AG04450 (cell line): ENCODE measurements at regions of chr14 and their contacts with region 1.

Region 1: DNA sequence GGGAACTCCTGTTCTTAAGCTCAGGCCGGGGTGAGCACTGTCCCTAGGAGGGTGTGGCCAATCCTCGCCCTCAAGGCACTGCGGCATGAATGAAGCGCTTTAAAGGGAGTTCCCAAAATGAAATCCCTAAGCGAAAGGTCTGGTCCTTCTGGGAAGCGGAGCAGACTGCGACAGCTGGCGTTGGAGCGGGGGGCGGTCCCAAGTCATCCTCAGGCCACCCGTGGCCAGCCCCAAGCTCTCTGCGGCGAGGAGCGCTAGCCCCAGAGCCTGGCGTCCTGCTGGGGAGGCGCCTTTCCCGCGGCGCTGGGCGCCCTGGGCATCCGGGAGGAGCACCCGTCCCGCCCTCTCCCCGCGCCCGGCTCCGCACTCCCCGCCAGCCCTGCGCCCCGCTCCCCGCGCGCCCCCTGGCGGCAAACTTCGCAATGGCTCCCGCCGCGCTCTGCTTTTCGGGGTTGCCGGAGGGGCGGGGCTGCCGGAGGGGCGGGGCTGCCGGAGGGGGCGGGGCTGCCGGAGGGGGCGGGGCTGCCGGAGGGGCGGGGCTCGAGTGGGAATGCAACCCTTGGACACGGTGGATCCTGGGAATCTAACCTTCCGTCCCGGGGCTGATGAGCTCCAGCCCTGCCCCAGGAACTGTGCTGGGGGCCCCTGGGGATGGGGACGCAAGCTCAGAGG is 25.4 kb downstream of the ZBTB42 start:
- DNase-seq: peak; percentile 21
- H3K4me3 ChIP-seq: peak overlapping the region; percentile 77
- H3K27ac ChIP-seq: peak overlapping the region; percentile 11
- H3K27me3 ChIP-seq: no peaks in the 10 kb centered on the region
- CTCF ChIP-seq: peak; percentile 58

Region 2: GRCh38 chr14:104752735-104753531 is 73.4 kb before region 1 on chr14 and contains the start of gene SIVA1:
- CTCF ChIA-PET with region 1: interaction called, 27 read pairs
- POLR2A ChIA-PET with region 1: no interaction called
- DNase-seq: peak; percentile 98
- H3K4me3 ChIP-seq: peak within 1 kb of the TSS; percentile 94
- H3K27ac ChIP-seq: peak within 1 kb of the TSS; percentile 52
- H3K27me3 ChIP-seq: no peaks in the 10 kb centered on the region
- CTCF ChIP-seq: no peak
- polyA plus RNA-seq, gene SIVA1: 49.7 and 75.3 TPM in 2 replicates

Region 3: DNA sequence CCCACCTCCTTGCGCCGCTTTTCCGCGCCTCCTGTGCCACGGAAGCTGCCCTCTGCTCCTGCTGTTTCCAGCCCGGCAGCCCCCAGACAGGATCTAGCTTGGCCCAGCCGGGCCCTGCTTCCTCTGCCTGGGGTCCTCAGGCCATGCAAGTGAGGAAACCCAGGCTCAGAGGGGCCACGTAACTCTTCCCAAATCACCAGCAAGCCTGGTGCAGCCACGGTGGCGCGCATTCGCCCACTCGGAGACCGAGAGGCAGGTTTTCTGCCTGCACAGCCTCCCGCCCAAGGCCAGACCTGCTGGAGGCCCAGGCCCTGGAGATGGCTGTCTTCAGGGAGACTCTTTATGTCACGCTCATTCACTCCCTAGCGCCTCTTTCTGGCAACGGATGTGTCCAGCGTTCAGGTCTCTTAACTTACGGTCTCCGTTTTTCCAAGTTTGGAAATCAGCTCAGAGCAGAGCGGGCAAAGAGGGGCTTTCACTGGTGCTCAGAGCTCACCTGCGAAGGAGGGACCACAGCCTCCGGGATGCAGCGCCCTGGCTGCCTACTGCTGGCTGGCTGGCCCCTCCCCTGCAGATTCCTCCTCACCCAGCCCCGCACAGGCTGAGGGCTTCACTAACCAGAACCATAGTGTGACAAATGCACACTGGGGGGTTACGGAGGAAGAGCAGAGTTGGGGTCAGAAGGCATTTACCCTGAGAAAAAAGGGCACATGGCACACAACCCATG is 18.1 kb after region 1 on chr14:
- CTCF ChIA-PET with region 1: interaction called, 10 read pairs
- POLR2A ChIA-PET with region 1: no interaction called
- DNase-seq: no peak
- H3K4me3 ChIP-seq: no peak overlapping the region
- H3K27ac ChIP-seq: no peak overlapping the region
- H3K27me3 ChIP-seq: peaks cover 78% of the 10 kb centered on the region
- CTCF ChIP-seq: no peak

Region 4: DNA sequence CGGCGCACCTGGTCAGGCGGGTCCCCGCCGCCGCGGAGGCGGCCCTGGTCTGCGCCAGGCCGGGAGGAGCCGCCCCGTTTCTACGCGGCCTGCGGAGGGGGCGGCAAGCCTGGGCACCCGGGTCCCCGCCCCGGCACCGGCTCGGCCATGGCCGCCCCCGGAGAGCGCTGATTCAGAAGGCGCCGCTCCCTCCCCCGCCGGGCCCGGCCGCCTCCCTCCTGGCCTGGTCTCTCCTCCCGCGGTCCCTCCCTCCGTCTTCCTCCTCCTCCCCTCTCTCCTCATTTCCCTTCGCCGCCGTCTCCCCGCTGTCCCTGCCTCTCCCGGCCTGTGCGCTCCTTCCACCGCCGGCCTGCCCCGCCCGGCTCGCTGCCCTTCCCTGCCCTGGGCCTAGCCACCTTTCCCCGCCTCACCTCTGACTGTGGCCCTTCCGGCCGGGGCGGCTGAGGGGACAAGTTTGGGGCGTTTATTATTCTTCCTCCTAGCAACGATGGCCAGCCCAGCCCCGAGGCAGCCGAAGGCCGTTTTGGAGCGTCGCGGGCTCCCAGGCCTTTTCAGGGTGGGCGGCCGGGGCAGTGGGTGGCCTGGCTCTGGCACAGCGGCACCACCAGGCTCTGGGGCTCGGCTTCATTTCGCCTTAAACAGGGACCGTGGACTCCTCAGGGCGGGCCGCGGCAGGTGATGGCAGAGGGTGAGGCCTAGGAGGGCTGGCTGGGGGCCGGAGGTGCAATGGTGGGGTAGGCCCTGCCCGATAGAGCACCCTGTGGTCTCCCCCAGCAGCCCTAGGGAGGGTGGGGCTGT is 39.5 kb after region 1 on chr14:
- CTCF ChIA-PET with region 1: interaction called, 12 read pairs
- POLR2A ChIA-PET with region 1: no interaction called
- DNase-seq: peak; percentile 13
- H3K4me3 ChIP-seq: peak overlapping the region; percentile 77
- H3K27ac ChIP-seq: peak overlapping the region; percentile 31
- H3K27me3 ChIP-seq: peaks cover 21% of the 10 kb centered on the region
- CTCF ChIP-seq: no peak